ENCODE measurements at regions of chr5 and their contacts with region 1.

Region 1: DNA sequence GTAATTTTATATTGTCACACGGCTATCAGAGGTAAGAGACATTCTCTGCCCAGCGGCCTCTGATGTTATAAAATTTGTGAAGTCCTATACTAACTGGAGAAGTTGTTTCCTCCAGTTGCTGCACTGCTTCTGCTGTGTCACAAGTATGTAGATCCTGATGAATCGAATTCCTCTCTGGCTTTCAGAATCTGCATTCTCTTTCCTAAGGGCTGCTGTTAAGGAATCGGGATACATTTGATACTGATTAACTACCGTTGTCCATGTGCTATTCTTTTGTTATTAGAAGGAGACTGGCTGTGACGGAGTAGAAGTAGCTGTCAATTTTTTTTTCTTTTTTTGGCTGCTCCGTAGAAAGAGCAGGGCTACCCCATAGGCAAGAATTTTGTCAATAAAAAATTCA is 81.7 kb upstream of the LRRC70 start:
- DNase-seq: no peak
- H3K4me3 ChIP-seq: no peak overlapping the region
- H3K27ac ChIP-seq: no peak overlapping the region
- H3K27me3 ChIP-seq: no peaks in the 10 kb centered on the region
- CTCF ChIP-seq: no peak

Region 2: GRCh38 chr5:62643556-62644451 is 146.9 kb after region 1 on chr5:
- CTCF ChIA-PET with region 1: no interaction called
- POLR2A ChIA-PET with region 1: no interaction called
- DNase-seq: no peak
- H3K4me3 ChIP-seq: no peak overlapping the region
- H3K27ac ChIP-seq: no peak overlapping the region
- H3K27me3 ChIP-seq: no peaks in the 10 kb centered on the region
- CTCF ChIP-seq: no peak

Region 3: DNA sequence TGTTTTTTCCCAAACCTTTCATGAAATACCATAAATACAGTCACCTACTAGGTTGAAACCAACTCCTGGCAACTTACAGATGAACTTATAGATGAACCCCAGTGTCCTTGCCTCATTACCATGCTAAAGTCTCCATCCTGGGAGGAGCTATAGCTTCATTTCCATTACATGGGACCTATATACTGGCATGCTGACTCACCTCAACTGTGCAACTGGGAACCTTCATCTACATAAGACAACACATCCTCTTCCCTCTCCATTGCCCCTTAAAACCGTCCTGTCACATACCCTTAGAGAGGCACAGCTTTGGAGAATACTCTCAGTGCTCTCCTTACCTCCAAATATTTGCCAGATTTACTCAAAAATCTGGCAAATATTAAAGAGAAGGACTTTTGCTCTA is 827.0 kb after region 1 on chr5:
- CTCF ChIA-PET with region 1: interaction called, 10 read pairs
- POLR2A ChIA-PET with region 1: no interaction called
- DNase-seq: no peak
- H3K4me3 ChIP-seq: no peak overlapping the region
- H3K27ac ChIP-seq: no peak overlapping the region
- H3K27me3 ChIP-seq: no peaks in the 10 kb centered on the region
- CTCF ChIP-seq: no peak